Calu3 (cell line): ENCODE measurements at regions of chr2 and their contacts with region 1.

Region 1: GRCh38 chr2:133146895-133147294 is 421.4 kb downstream of the NCKAP5 start:
- DNase-seq: no peak
- H3K4me3 Mint-ChIP-seq: no peak overlapping the region
- H3K27ac Mint-ChIP-seq: no peak overlapping the region
- H3K4me1 Mint-ChIP-seq: peaks cover 14% of the 10 kb centered on the region
- H3K27me3 Mint-ChIP-seq: no peaks in the 10 kb centered on the region
- CTCF ChIP-seq: no peak

Region 2: DNA sequence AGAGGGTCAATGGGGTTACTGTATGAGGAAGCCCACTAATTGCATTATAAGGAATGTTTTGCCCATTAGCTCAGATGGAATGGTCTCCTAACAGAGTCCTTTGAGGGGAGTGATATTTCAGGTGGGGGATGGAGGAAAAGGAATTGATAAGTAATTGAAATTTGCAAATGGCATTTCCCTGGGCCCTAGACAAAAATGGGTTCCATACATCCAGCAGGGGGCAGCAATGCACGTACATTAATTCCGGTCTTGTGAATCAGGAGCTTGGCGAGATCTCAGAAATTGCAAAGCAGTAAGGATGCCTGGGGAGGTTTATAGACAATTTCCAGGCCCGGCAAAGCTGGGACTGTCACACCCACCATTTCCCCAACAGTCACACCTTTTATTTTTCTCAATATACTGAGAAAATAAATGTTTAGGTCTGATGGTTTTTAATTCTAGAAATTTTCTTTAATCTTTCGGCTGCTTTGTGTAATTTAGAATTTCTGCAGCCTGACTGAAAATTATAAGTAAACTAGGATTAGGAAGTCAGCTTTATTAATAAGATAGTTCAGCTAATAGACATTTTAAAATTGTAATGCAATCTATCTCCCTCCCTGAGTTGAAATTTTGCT is 599.7 kb before region 1 on chr2:
- CTCF ChIA-PET with region 1: no interaction called
- intact Hi-C with region 1: loop called (anchors 10 kb)
- DNase-seq: peak; percentile 79
- H3K4me3 Mint-ChIP-seq: no peak overlapping the region
- H3K27ac Mint-ChIP-seq: no peak overlapping the region
- H3K4me1 Mint-ChIP-seq: peaks cover 9% of the 10 kb centered on the region
- H3K27me3 Mint-ChIP-seq: no peaks in the 10 kb centered on the region
- CTCF ChIP-seq: peak; percentile 79

Region 3: GRCh38 chr2:132936791-132937190 is 210.1 kb before region 1 on chr2:
- CTCF ChIA-PET with region 1: no interaction called
- intact Hi-C with region 1: loop called (anchors 10 kb)
- DNase-seq: no peak
- H3K4me3 Mint-ChIP-seq: no peak overlapping the region
- H3K27ac Mint-ChIP-seq: no peak overlapping the region
- H3K4me1 Mint-ChIP-seq: peaks cover 18% of the 10 kb centered on the region
- H3K27me3 Mint-ChIP-seq: no peaks in the 10 kb centered on the region
- CTCF ChIP-seq: no peak